ENCODE measurements at regions of chr3 and their contacts with region 1.

Region 1: GRCh38 chr3:190120269-190121060 is at the start of gene P3H2:
- DNase-seq: peak; percentile 91
- H3K4me3 Mint-ChIP-seq: peak within 1 kb of the TSS; percentile 95
- H3K27ac Mint-ChIP-seq: peak within 1 kb of the TSS; percentile 70
- H3K4me1 Mint-ChIP-seq: peaks cover 51% of the 10 kb centered on the region
- H3K27me3 Mint-ChIP-seq: no peaks in the 10 kb centered on the region
- CTCF ChIP-seq: peak; percentile 32
- total RNA-seq, gene P3H2: 19.8 and 60.2 TPM in 2 replicates

Region 2: GRCh38 chr3:189967254-189967865 is 153.1 kb before region 1 on chr3:
- CTCF ChIA-PET with region 1: interaction called, 20 read pairs
- POLR2A ChIA-PET with region 1: interaction called, 11 read pairs
- intact Hi-C with region 1: loop called (anchors 1 kb)
- DNase-seq: peak; percentile 76
- H3K4me3 Mint-ChIP-seq: no peak overlapping the region
- H3K27ac Mint-ChIP-seq: no peak overlapping the region
- H3K4me1 Mint-ChIP-seq: no peaks in the 10 kb centered on the region
- H3K27me3 Mint-ChIP-seq: no peaks in the 10 kb centered on the region
- CTCF ChIP-seq: peak; percentile 72

Region 3: GRCh38 chr3:190024912-190025311 is 95.6 kb before region 1 on chr3:
- CTCF ChIA-PET with region 1: interaction called, 7 read pairs
- POLR2A ChIA-PET with region 1: interaction called, 132 read pairs
- intact Hi-C with region 1: no loop called
- DNase-seq: no peak
- H3K4me3 Mint-ChIP-seq: no peak overlapping the region
- H3K27ac Mint-ChIP-seq: no peak overlapping the region
- H3K4me1 Mint-ChIP-seq: peaks cover 5% of the 10 kb centered on the region
- H3K27me3 Mint-ChIP-seq: no peaks in the 10 kb centered on the region
- CTCF ChIP-seq: no peak

Region 4: DNA sequence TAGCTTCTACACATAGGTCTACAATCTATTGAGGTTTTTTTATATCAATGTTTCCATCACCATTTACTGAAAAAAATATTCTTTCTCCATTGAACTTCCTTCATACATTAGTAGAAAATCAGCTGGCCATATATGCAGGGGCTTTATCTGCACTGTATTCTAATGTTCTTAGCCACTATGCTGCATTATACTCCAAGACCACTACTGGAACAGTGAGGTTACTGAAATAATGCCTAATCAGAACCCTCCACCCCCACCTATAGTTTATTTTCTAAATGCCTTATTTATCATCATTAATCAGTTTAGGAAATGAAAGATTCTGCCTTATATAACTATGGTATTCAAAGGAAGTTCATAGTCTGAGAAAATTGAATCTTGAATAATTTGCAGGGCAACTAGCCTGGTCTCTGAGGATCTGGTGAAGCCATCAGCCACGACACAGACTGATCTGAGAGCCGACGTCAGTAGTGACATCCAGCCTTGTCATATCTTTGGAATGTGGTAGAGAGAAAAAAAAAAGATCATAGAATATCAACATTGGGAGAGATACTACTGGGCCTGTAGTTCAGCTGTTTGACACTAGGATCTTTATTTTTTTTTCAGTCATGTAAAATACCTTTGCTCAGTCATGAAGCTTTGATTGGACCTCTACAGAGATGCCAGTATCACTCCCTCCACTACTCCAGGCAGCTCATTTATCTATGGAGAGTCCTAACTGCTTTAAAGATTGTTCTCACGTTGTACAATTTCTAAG is 66.4 kb before region 1 on chr3:
- CTCF ChIA-PET with region 1: interaction called, 20 read pairs
- POLR2A ChIA-PET with region 1: interaction called, 47 read pairs
- intact Hi-C with region 1: no loop called
- DNase-seq: peak; percentile 42
- H3K4me3 Mint-ChIP-seq: no peak overlapping the region
- H3K27ac Mint-ChIP-seq: peak overlapping the region; percentile 75
- H3K4me1 Mint-ChIP-seq: peaks cover 28% of the 10 kb centered on the region
- H3K27me3 Mint-ChIP-seq: no peaks in the 10 kb centered on the region
- CTCF ChIP-seq: peak; percentile 21

Region 5: DNA sequence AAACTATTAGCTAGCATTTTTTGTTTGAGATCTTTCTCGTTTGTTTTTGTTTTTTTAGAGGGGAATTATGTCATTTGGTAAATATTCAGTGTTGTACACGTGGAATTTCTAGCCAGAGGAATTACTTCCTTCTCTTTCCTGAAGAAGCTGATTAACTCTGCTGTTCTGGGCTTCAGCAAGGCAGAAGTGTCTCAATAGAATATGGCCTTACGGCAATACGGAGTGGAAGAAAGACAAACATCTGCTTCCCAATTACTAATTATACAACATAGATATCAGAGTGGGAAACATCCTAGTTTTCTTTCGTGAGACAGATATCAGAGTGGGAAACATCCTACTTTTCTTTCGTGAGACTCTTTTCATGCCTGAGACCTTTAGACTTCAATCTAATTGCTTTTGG is 11.7 kb before region 1 on chr3:
- CTCF ChIA-PET with region 1: interaction called, 6 read pairs
- POLR2A ChIA-PET with region 1: interaction called, 15 read pairs
- intact Hi-C with region 1: no loop called
- DNase-seq: no peak
- H3K4me3 Mint-ChIP-seq: no peak overlapping the region
- H3K27ac Mint-ChIP-seq: peak overlapping the region; percentile 69
- H3K4me1 Mint-ChIP-seq: peaks cover 34% of the 10 kb centered on the region
- H3K27me3 Mint-ChIP-seq: no peaks in the 10 kb centered on the region
- CTCF ChIP-seq: no peak

Region 6: GRCh38 chr3:190205739-190206138 is 85.3 kb after region 1 on chr3:
- CTCF ChIA-PET with region 1: interaction called, 20 read pairs
- POLR2A ChIA-PET with region 1: interaction called, 9 read pairs
- intact Hi-C with region 1: loop called (anchors 1 kb)
- DNase-seq: peak; percentile 44
- H3K4me3 Mint-ChIP-seq: no peak overlapping the region
- H3K27ac Mint-ChIP-seq: peak overlapping the region; percentile 12
- H3K4me1 Mint-ChIP-seq: peaks cover 11% of the 10 kb centered on the region
- H3K27me3 Mint-ChIP-seq: no peaks in the 10 kb centered on the region
- CTCF ChIP-seq: no peak